Posterior vena cava (tissue), 2 donors: ENCODE measurements at regions of chr20 and their contacts with region 1.

Region 1: DNA sequence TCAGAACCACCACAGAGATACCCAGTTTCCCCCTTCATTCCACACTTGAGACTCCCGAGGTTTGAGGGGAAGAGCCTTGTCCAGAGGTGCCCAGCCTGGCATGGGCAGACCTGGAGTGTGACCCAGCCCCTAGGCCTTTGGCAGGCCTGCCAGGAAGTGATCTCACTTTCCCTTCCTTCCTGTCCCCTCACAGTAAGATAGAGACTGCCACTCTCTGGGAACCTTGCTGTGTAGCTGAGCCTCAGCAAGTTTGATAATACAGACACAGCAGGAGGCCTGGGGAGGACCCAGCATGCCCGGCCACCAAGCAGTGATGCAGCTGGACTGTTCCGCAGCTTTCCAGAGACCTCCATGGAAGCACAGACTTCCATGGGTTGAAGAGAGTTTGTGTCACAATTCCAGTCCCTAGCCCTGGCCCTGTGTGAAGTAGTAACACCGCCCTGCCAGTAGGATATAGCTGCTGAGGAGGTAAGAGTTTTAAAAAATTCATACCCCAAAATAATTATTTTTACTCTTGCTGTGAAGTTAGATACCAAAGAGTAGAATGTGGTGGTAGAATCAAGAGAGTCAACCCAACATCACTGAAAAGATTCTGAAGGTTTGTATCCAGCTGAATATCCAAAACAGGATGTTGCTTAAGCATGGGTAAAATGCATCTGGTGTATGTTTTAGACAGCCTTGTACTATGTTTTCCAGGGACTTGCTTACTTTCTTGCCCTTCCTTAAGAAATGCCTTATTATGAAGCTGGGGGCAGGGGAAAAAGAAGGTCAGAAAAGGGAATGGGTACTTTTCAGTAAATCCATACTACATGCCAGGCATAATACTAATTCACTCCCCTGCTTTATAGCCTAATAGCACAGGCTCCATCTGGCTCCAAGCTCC is 16.3 kb downstream of the PKIG start:
- DNase-seq: peak; percentile 83

Region 2: GRCh38 chr20:44540834-44541233 is 57.8 kb before region 1 on chr20:
- intact Hi-C with region 1: loop called in 1 of 2 experiments (anchors 10 kb)
- DNase-seq: no peak